ENCODE measurements at regions of chr16 and their contacts with region 1.

Region 1: DNA sequence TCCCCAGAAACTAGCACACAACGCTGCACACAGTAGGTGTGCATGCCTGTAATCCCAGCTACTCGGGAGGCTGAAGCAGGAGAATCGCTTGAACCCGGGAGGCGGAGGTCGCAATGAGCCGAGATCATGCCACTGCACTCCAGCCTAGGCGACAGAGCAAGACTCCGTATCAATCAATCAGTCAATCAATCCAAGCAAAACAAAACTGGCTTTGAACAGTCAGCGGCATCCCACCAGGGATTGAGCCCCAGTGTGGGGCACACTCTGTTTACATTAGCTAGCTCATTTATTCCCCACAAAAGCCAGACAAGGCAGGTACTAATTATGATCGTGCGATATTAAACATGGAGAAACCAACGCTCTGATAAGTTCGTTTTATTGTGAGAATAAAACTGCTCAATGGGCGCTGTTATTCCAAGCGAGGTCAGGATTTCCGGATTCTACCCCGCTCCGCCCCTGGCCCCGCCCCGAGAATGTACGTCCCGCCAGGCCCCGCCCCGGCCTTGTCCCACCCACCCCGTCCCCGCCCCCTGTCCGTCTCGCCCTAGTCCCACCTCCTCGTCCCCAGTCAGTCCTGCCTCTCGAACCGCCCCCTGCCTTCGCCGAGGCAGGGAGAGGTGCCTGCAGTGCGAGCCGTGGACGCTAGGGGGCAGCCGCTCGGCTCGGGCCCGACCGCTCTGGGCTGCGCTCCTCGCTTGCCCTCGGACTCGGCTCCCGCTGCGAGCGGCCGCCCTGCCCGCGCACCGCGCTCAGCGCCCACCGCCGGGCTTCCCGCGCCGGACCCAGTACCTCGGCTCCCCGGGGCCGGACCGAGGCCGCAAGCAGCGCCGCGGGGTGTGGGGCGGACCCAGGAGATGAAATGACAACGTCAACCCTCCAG is at the start of gene VPS4A:
- DNase-seq: peak; percentile 98
- H3K4me3 ChIP-seq: peak within 1 kb of the TSS; percentile 74 to 89 (median 85)
- H3K27ac ChIP-seq: peak within 1 kb of the TSS; percentile 87 to 93 (median 88)
- H3K4me1 ChIP-seq: peaks cover 0 to 28% (median 20%) of the 10 kb centered on the region in 4 donors
- H3K27me3 ChIP-seq: no peaks in the 10 kb centered on the region
- CTCF ChIP-seq: peak; percentile 28 to 94 (median 50)
- EP300 ChIP-seq: no peak
- POLR2A ChIP-seq: peak in 1 of 2 donors; percentile 19
- total RNA-seq, gene VPS4A: 31.7 to 39.3 (median 34.8) TPM

Region 2: DNA sequence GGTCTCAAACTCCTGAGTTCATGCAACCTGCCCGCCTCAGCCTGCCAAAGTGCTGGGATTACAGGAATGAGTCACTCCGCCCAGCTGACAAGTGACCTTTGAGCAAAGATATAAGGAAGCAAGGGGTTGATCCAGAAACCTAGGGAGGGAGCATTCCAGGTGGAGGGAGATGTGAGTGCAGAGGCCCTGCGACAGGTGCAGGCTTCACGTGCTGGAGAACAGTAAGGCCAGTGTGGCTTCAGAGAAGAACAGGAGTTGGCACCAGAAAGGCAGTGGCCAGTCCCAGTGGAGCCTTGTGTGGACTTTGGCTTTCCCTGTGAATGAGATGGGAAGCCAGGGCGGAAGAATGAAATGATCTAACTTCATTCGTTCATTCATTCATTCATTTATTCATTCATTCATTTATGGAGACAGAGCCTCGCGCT is 279.0 kb before region 1 on chr16:
- intact Hi-C with region 1: no loop called
- DNase-seq: no peak
- H3K4me3 ChIP-seq: no peak overlapping the region
- H3K27ac ChIP-seq: no peak overlapping the region
- H3K4me1 ChIP-seq: peaks cover 0 to 2% (median 0%) of the 10 kb centered on the region in 4 donors
- H3K27me3 ChIP-seq: no peaks in the 10 kb centered on the region
- CTCF ChIP-seq: no peak
- EP300 ChIP-seq: no peak
- POLR2A ChIP-seq: no peak

Region 3: GRCh38 chr16:69330286-69331109 is 19.6 kb after region 1 on chr16 and contains the start of gene PDF:
- intact Hi-C with region 1: loop called (anchors 2 kb)
- DNase-seq: peak; percentile 96
- H3K4me3 ChIP-seq: peak within 1 kb of the TSS; percentile 67 to 97 (median 88)
- H3K27ac ChIP-seq: peak within 1 kb of the TSS; percentile 82 to 97 (median 91)
- H3K4me1 ChIP-seq: peaks cover 0 to 55% (median 51%) of the 10 kb centered on the region in 4 donors
- H3K27me3 ChIP-seq: no peaks in the 10 kb centered on the region
- CTCF ChIP-seq: no peak
- EP300 ChIP-seq: no peak
- POLR2A ChIP-seq: peak; percentile 59 to 74
- total RNA-seq, gene PDF: 8.6 to 18.6 (median 10.5) TPM

Region 4: DNA sequence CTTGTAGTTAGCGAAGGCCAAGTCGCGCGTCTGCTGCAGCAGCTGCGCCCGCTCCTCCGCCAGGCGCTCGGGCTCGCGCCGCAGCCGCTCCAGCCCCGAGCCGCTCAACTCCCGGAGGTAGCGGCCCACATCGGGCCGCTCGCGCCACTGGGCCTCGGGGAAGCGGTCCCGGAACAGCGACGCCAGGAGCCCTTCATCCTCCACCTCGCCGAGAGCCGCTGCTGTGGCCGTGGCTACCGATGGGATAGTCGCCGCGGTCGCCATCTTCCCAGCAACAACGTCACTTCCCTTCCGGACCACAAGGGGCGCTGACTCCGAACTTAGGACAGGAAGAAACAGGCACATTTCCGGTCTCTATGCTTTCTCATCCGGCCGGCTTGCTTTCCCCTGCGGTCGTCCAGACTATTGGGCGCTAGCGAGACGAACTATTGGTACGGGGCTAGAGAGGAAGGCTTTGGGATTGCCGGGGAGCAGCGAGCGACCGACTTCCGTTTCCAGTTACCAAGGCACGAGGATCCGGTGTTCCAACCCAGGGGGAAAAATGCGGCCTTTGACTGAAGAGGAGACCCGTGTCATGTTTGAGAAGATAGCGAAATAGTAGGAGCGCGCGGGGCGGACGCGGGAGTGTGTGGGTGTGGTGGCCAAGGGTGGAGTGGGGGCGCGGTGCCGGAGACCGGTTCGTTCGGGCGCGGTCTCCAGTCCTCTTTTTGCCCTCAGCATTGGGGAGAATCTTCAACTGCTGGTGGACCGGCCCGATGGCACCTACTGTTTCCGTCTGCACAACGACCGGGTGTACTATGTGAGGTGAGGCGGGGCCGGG is 28.6 kb after region 1 on chr16 and contains the starts of genes COG8 and NIP7:
- intact Hi-C with region 1: loop called (anchors 2 kb)
- DNase-seq: peak; percentile 97
- H3K4me3 ChIP-seq: peak within 1 kb of the TSS; percentile 80 to 98 (median 88)
- H3K27ac ChIP-seq: peak within 1 kb of the TSS; percentile 90 to 95 (median 93)
- H3K4me1 ChIP-seq: peaks cover 0 to 31% (median 29%) of the 10 kb centered on the region in 4 donors
- H3K27me3 ChIP-seq: no peaks in the 10 kb centered on the region
- CTCF ChIP-seq: peak; percentile 76 to 91 (median 89)
- EP300 ChIP-seq: no peak
- POLR2A ChIP-seq: peak in 1 of 2 donors; percentile 30
- total RNA-seq, gene COG8: 32.2 to 57.6 (median 42.5) TPM
- total RNA-seq, gene NIP7: 6.9 to 11.4 (median 9.1) TPM

Region 5: GRCh38 chr16:69513188-69513961 is 202.5 kb after region 1 on chr16:
- intact Hi-C with region 1: no loop called
- DNase-seq: no peak
- H3K4me3 ChIP-seq: no peak overlapping the region
- H3K27ac ChIP-seq: no peak overlapping the region
- H3K4me1 ChIP-seq: no peaks in the 10 kb centered on the region
- H3K27me3 ChIP-seq: no peaks in the 10 kb centered on the region
- CTCF ChIP-seq: no peak
- EP300 ChIP-seq: no peak
- POLR2A ChIP-seq: no peak

Measured in sigmoid colon (tissue), 7 donors.